HEK293T (cell line): ENCODE measurements at regions of chr15 and their contacts with region 1.

Region 1: DNA sequence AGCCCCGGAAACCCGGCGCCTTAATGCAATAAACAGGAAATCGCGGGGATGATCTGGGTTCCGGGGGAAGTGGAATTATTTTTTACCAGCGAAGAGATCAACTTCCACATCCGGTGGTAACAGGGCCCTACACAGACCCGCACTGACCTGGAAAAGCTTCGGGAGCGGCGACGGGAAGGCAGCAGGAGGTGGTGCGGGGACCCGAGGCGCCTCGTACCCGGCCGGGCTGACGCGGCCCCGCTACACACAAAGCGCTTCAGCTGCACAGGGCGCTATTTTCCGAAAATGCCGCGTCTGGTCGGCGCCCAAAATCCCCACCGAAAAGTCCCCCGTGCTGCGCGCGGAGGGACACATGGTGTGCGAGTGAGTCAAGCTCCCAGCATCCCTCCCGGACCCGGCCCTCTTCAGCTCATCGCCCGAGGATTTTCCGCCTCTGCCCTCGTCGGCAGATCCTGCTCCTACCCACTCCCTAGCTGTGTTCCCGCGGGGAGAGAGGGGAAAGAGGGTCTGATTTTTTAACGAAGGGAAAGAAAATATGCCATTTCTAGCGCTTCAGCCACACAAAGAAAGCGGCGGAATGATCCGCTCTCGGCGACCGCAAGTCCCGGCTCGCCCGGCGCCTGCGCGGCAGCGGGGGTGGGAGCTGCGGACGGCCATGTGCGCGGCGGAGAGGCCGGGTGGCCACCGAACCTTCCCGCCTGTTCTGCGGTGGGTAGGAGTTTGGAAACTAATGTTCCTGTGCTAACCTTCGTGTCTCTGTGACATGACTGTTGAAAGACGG is at the start of gene GABPB1:
- DNase-seq: peak; percentile 70

Region 2: GRCh38 chr15:50182219-50183013 is 172.6 kb before region 1 on chr15:
- CTCF ChIA-PET with region 1: no interaction called
- POLR2A ChIA-PET with region 1: interaction called, 10 read pairs
- DNase-seq: peak; percentile 41

Region 3: GRCh38 chr15:50424066-50424890 is 69.2 kb after region 1 on chr15 and contains the start of gene USP8:
- CTCF ChIA-PET with region 1: no interaction called
- POLR2A ChIA-PET with region 1: interaction called, 18 read pairs
- DNase-seq: peak; percentile 85